Posterior vena cava (tissue), 2 donors: ENCODE measurements at regions of chr4 and their contacts with region 1.

Region 1: GRCh38 chr4:173091362-173091761 is 77.2 kb upstream of the GALNT7 start:
- DNase-seq: no peak

Region 2: DNA sequence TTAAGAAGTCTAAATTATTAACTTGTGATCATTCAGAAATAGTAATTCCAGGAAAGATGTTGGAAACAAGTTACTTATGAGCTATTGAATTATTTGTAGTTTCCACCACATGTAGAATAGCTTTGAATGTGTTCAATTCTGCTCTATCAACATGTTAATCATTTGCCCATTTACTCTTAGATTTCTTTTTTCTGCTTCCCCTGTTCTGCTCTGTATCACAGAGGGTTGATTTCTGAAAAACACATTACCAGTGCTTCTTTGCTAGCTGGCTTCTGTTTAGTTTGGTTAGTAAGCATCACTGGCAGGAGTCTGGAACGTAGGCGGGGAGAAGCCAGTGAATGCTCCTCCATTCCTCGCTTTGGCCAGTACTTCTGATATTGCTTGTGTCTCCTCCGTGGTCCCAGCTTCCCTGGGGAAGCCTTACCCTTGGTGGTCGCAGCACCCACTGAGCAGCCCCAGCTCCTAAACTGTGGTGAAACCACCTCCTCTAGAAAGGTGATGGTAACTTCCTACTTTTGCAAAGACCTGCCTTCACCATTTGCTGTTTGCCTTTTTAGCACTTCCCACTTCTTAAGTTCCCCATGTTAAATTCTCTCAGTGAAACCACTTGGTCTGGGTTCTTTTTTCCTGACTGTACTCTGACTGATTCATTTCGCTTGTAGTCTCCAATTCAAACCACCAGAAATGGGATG is 37.0 kb after region 1 on chr4:
- intact Hi-C with region 1: loop called in 1 of 2 experiments (anchors 1 kb)
- DNase-seq: no peak

Region 3: GRCh38 chr4:173386751-173387150 is 295.4 kb after region 1 on chr4:
- intact Hi-C with region 1: no loop called
- DNase-seq: no peak